PC-3 (cell line): ENCODE measurements at regions of chr3 and their contacts with region 1.

Region 1: DNA sequence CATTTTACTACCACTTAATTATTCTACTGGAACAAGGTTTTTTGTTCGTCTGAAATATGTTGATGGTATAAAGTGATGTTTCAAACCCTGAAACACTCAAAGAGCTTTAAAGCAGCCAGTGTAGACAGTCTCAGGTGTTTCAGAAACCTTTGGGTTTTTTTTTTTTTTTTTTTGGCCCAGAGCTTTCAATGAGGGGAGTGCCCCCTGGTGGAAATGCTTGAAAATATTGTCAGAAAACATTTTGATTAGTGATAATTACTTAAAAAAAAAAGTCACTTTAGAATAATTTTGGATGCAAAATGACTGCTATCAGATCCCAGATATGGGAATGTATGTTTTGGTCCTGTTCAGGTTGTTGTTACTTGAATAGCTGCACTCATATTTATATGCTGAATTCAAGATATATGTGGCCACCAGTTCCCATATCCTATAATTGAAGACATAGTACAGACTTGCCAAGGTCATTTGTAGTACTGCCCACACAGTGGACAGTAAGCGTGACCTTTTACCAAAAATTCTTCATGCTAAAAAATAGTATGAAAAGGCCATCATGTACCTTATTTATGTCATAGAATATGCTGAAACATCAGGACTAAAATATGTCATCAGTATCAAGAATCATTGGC is 35.9 kb downstream of the SATB1 start:
- DNase-seq: peak; percentile 60
- ATAC-seq: no peak
- H3K4me3 ChIP-seq: no peak overlapping the region
- H3K27ac ChIP-seq: no peak overlapping the region
- H3K4me1 ChIP-seq: no peaks in the 10 kb centered on the region
- H3K27me3 ChIP-seq: no peaks in the 10 kb centered on the region
- CTCF ChIP-seq: peak; percentile 83

Region 2: GRCh38 chr3:17423786-17424536 is 965.3 kb before region 1 on chr3:
- CTCF ChIA-PET with region 1: no interaction called
- POLR2A ChIA-PET with region 1: no interaction called
- intact Hi-C with region 1: loop called (anchors 10 kb)
- DNase-seq: no peak
- ATAC-seq: peak; percentile 43
- H3K4me3 ChIP-seq: no peak overlapping the region
- H3K27ac ChIP-seq: no peak overlapping the region
- H3K4me1 ChIP-seq: peaks cover 7% of the 10 kb centered on the region; the same call in 1 of the 2 replicates
- H3K27me3 ChIP-seq: no peaks in the 10 kb centered on the region
- CTCF ChIP-seq: no peak

Region 3: DNA sequence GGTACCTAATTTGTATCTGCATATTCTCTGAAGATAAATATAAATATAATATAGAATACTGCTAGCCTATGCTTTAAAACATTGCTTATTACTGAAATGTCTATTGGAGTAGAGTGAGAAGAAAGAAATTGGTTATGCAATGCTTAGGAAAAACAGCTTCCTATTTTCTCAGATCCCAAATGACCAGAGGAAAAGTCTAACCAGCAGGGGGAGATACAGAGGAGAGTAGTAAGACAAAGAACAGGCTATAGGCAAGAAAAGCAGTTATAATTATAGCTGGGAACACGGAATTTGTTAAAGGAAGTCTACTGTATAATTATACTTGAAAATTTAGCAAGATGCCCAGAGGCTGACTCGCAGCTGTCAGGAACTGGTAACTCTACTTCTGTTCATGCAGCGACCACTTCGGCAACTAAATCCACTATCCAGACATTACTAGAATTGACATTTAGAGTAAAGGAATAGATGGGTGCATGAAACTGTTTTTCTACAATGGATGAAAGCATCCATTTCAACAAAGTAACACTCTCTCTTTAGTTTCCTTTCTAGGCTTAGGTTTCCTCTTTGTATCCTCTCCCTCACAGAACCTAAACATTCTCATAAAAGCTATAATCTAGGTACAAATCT is 744.0 kb before region 1 on chr3:
- CTCF ChIA-PET with region 1: no interaction called
- POLR2A ChIA-PET with region 1: no interaction called
- intact Hi-C with region 1: loop called (anchors 5 kb)
- DNase-seq: peak; percentile 85
- ATAC-seq: peak; percentile 89
- H3K4me3 ChIP-seq: no peak overlapping the region
- H3K27ac ChIP-seq: no peak overlapping the region
- H3K4me1 ChIP-seq: peaks cover 4% of the 10 kb centered on the region; the same call in 1 of the 2 replicates
- H3K27me3 ChIP-seq: no peaks in the 10 kb centered on the region
- CTCF ChIP-seq: peak; percentile 85

Region 4: GRCh38 chr3:17894434-17895060 is 494.7 kb before region 1 on chr3:
- CTCF ChIA-PET with region 1: no interaction called
- POLR2A ChIA-PET with region 1: no interaction called
- intact Hi-C with region 1: loop called (anchors 1 kb)
- DNase-seq: peak; percentile 73
- ATAC-seq: peak; percentile 85
- H3K4me3 ChIP-seq: no peak overlapping the region
- H3K27ac ChIP-seq: no peak overlapping the region
- H3K4me1 ChIP-seq: peaks cover 13% of the 10 kb centered on the region
- H3K27me3 ChIP-seq: no peaks in the 10 kb centered on the region
- CTCF ChIP-seq: peak; percentile 78

Region 5: GRCh38 chr3:17905996-17906395 is 483.2 kb before region 1 on chr3:
- CTCF ChIA-PET with region 1: interaction called, 6 read pairs
- POLR2A ChIA-PET with region 1: no interaction called
- intact Hi-C with region 1: loop called (anchors 2 kb)
- DNase-seq: no peak
- ATAC-seq: peak; percentile 54
- H3K4me3 ChIP-seq: no peak overlapping the region
- H3K27ac ChIP-seq: no peak overlapping the region
- H3K4me1 ChIP-seq: no peaks in the 10 kb centered on the region
- H3K27me3 ChIP-seq: no peaks in the 10 kb centered on the region
- CTCF ChIP-seq: peak; percentile 30; the same call in 1 of the 2 replicates

Region 6: GRCh38 chr3:17979252-17979651 is 410.0 kb before region 1 on chr3:
- CTCF ChIA-PET with region 1: no interaction called
- POLR2A ChIA-PET with region 1: no interaction called
- intact Hi-C with region 1: loop called (anchors 5 kb)
- DNase-seq: peak; percentile 35
- ATAC-seq: peak; percentile 77
- H3K4me3 ChIP-seq: no peak overlapping the region
- H3K27ac ChIP-seq: no peak overlapping the region
- H3K4me1 ChIP-seq: peaks cover 7% of the 10 kb centered on the region; the same call in 1 of the 2 replicates
- H3K27me3 ChIP-seq: no peaks in the 10 kb centered on the region
- CTCF ChIP-seq: peak; percentile 46; the same call in 1 of the 2 replicates